Vagina (tissue), 2 donors: ENCODE measurements at regions of chr1 and their contacts with region 1.

Region 1: DNA sequence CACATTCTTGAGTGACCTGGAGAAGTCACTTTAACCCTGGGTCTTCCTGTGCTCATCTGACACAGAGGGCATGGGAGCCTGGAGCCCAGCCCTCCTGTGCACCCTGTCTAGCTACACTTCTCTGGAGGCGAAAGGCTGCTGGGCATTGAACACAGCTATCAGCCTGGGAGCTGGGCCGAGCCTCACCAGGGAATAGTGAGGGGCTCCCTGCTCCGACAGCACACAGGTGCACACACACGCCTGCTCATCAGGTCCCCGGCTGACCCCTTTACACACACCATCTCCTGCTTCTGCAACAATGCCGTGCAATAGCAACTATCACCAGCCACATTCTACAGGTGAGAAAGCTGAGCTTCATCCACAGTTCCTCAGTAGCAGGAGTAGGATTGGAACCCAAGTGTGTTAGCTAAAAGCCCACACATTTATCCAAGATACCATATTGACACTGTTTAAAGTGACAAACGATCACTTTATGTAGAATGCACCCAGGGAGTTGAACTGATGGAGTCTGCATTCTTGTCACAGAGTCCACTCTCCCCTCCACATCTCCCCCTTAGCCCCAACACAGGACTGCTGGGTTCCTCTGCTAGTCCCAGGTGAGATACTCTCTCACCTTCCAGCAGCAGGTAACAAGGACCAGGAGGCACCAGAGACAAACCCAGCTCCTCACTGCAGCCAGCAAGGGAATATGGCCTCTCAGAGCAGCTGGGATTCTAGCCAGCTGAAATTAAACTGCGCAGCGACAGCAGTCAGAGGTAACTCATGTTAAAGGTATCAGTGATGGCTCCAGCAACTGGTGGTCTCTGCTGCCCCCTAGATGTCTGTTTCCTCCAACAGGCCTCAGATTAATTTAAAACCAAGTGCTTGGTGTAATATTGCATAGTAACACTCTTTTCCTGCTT is 18.3 kb upstream of the CAPN8 start:
- DNase-seq: no peak
- H3K4me3 ChIP-seq: no peak overlapping the region
- H3K27ac ChIP-seq: no peak overlapping the region
- H3K4me1 ChIP-seq: no peaks in the 10 kb centered on the region
- H3K27me3 ChIP-seq: no peaks in the 10 kb centered on the region
- CTCF ChIP-seq: peak in 1 of 3 experiments; percentile 37
- POLR2A ChIP-seq: no peak

Region 2: DNA sequence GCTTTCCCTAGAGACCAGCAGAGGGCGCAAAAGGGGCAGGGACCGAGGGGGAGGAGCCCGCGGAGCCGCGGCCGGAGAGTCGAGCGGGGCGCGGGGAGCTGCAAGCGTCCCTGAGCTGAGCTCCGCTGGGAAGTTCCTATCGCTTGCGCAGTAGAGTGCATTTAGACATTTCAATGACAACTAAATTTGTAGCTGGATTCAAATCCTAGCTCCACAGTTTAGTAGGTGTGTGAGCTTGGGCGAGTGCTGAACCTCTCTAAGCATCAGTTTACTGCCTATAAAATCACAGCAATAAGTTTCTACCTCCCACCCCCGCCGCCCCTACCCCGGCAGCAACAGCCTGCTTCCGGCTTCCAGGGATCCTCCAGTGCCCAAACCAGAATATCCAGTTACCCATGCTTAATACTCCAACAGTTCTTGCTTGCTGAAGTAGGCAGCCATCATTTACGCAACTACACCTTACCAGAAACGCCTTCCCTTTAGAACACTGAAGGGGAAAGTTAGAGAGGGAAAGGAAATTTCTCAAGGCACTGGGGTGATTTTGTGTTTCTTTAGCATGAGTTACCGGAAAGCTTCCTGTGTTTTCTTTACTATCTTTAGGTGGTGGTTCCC is 549.9 kb before region 1 on chr1:
- intact Hi-C with region 1: loop called (anchors 10 kb)
- DNase-seq: no peak
- H3K4me3 ChIP-seq: peak overlapping the region; percentile 34 to 41
- H3K27ac ChIP-seq: peak overlapping the region; percentile 54
- H3K4me1 ChIP-seq: peaks cover 61% of the 10 kb centered on the region
- H3K27me3 ChIP-seq: no peaks in the 10 kb centered on the region
- CTCF ChIP-seq: peak in 2 of 3 experiments; percentile 84 to 92
- POLR2A ChIP-seq: no peak

Region 3: DNA sequence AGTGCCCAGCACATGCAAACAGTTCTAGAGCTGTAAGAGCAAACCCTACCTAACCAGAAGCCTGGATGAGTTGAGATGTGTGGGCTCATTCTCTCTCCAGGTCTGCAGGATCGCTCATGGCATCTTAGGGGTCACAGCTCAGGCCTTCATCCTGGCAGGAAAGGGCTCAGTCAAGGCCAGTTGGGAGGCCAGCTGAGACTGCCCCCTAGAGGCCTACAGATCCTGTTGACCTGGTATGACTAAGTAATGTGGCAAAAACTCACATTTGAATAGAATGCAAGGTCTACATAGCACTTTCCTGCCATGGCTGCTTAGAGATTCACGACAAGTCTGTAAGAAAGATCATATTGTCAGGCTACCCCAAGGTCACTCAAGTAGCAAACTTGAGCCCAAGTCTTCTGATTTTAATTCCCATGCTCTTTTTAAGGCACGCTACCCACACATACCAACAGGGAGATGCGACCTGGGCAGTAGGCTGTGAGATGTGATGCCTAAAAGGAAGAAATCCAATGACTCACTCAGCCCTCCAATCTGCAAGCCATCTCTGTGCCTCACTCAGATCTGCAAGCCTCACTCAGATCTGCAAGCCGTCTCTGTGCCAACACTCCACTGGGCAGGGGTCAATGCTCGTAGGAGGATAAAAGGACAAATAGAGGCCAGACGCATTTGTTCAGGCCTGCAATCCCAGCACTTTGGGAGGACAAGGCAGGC is 13.2 kb before region 1 on chr1:
- intact Hi-C with region 1: no loop called
- DNase-seq: no peak
- H3K4me3 ChIP-seq: no peak overlapping the region
- H3K27ac ChIP-seq: no peak overlapping the region
- H3K4me1 ChIP-seq: no peaks in the 10 kb centered on the region
- H3K27me3 ChIP-seq: no peaks in the 10 kb centered on the region
- CTCF ChIP-seq: peak in 1 of 3 experiments; percentile 10
- POLR2A ChIP-seq: no peak

Region 4: GRCh38 chr1:223878598-223879325 is 194.9 kb after region 1 on chr1:
- intact Hi-C with region 1: no loop called
- DNase-seq: no peak
- H3K4me3 ChIP-seq: no peak overlapping the region
- H3K27ac ChIP-seq: no peak overlapping the region
- H3K4me1 ChIP-seq: no peaks in the 10 kb centered on the region
- H3K27me3 ChIP-seq: no peaks in the 10 kb centered on the region
- CTCF ChIP-seq: no peak
- POLR2A ChIP-seq: no peak